Activated CD4-positive, alpha-beta memory T cell treated with anti-CD3 and anti-CD28 coated beads, Interleukin-2, amount 10 ng/mL, durations not matched to agents 7 days and 5 days (primary cell): ENCODE measurements at regions of chr20 and their contacts with region 1.

Region 1: DNA sequence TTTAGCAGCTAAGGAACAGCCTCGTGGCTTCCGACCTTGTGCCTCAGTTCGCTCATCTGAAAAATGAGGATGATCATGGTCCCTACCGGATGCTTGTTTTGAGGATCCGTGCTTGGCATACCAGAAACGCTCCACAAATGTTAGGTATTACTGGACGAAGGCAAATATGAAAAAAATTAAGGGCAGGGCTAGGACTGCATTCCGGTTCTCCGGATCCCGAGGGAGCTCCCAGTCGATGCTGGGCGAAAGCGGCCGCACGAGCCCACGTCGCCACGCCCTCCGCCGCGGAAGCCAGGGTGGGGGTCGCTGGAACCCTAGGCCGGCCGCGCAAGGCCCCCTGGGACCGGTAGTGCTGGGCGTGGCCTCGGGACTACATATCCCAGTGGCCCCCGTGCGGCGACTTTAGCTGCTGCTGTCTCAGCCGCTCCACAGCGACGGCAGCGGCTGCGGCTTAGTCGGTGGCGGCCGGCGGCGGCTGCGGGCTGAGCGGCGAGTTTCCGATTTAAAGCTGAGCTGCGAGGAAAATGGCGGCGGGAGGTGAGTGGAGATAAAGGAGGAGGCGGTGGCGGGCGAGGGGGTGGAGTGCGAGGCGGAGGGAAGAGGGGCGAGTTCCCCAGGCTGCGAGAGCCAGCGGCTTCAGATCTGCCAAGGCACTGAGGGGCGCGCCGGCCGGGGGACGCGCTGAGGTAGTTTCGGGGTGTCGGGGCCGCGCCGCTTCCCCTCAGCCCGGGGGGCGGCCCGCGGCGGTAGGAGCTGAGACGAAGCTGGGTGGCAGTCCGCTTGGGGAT is at the start of gene NCOA3:
- DNase-seq: peak; percentile 95
- H3K4me3 Mint-ChIP-seq: peak within 1 kb of the TSS; percentile 94
- H3K27ac Mint-ChIP-seq: peak within 1 kb of the TSS; percentile 97
- H3K4me1 Mint-ChIP-seq: peaks cover 59% of the 10 kb centered on the region
- H3K27me3 Mint-ChIP-seq: no peaks in the 10 kb centered on the region
- total RNA-seq, gene NCOA3: 81.0 to 83.1 TPM

Region 2: GRCh38 chr20:47356526-47357295 is 145.0 kb before region 1 on chr20 and contains the start of gene ZMYND8:
- CTCF ChIA-PET with region 1: interaction called, 6 read pairs
- POLR2A ChIA-PET with region 1: interaction called, 50 read pairs
- DNase-seq: peak; percentile 99
- H3K4me3 Mint-ChIP-seq: peak within 1 kb of the TSS; percentile 81
- H3K27ac Mint-ChIP-seq: peak within 1 kb of the TSS; percentile 94
- H3K4me1 Mint-ChIP-seq: peaks cover 24% of the 10 kb centered on the region
- H3K27me3 Mint-ChIP-seq: no peaks in the 10 kb centered on the region
- total RNA-seq, gene ZMYND8: 37.8 to 44.2 TPM

Region 3: DNA sequence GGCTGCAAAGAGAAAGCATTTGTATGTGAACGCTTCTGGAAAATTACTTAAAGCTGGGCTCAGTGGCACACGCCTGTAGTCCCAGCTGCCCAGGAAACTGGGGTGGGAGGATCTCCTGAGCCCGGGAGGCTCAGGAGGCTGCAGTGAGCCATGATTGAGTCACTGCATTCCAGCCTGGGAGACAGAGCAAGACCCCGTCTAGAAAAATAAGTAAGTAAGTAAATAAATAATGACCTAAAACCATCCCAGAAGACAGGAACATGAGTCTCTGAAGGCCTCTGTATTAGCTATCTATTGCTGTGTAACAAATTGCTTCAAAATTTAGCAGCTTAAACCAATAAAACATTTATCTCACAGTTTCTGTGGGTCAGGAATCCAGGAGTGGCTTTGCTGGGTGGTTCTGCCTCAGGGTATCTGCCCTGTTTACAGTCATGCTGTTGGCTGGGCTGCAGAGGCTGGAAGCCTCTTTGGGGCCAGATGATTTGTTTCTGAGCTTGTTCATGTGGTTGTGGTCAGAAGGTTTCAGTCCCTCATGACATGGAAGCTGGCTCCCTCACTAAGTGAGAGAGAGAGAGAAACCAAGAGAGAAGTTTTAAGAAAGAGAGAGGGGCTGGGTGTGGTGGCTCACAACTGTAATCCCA is 48.4 kb before region 1 on chr20:
- CTCF ChIA-PET with region 1: interaction called, 4 read pairs
- POLR2A ChIA-PET with region 1: interaction called, 15 read pairs
- DNase-seq: peak; percentile 68
- H3K4me3 Mint-ChIP-seq: no peak overlapping the region
- H3K27ac Mint-ChIP-seq: peak overlapping the region; percentile 73
- H3K4me1 Mint-ChIP-seq: peaks cover 44% of the 10 kb centered on the region
- H3K27me3 Mint-ChIP-seq: no peaks in the 10 kb centered on the region

Region 4: GRCh38 chr20:47487175-47487917 is 14.3 kb before region 1 on chr20:
- CTCF ChIA-PET with region 1: interaction called, 41 read pairs
- POLR2A ChIA-PET with region 1: interaction called, 351 read pairs
- DNase-seq: peak; percentile 68
- H3K4me3 Mint-ChIP-seq: peak overlapping the region; percentile 47
- H3K27ac Mint-ChIP-seq: peak overlapping the region; percentile 98
- H3K4me1 Mint-ChIP-seq: peaks cover 75% of the 10 kb centered on the region
- H3K27me3 Mint-ChIP-seq: no peaks in the 10 kb centered on the region

Region 5: DNA sequence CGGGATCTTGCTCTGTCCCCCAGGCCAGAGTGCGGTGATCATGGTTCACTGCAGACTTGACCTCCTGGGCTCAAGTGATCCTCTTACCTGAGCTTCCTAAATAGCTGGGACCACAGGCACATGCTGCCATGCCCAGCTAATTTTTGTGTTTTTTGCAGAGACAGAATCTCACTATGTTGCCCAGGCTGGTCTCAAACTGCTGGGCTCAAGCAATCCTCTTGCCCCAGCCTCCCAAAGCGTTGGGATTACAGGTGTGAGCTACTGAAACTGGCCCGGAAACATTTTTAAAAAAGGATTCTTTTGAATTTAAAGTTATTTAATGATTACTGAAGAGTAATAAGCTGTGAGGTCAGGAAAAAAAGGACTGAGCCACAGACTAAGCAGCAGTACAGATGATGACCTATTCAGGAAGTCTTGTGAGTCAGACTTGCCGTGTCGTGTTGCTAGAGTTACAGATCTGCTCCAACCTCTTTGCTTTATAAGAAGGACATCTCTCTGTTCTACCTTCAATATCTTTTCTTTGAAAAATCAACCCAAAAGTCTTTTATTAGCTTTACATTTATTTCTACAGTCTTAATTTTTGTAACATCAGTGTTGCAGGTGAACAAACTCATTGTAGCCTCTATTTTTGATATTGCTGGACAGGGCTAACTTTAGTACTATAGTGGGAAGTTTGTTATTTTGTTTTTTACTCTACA is 108.7 kb after region 1 on chr20:
- CTCF ChIA-PET with region 1: interaction called, 5 read pairs
- POLR2A ChIA-PET with region 1: interaction called, 20 read pairs
- DNase-seq: peak; percentile 85
- H3K4me3 Mint-ChIP-seq: peak overlapping the region; percentile 54
- H3K27ac Mint-ChIP-seq: peak overlapping the region; percentile 85
- H3K4me1 Mint-ChIP-seq: peaks cover 71% of the 10 kb centered on the region
- H3K27me3 Mint-ChIP-seq: no peaks in the 10 kb centered on the region